ENCODE measurements at regions of chr9 and their contacts with region 1.

Region 1: DNA sequence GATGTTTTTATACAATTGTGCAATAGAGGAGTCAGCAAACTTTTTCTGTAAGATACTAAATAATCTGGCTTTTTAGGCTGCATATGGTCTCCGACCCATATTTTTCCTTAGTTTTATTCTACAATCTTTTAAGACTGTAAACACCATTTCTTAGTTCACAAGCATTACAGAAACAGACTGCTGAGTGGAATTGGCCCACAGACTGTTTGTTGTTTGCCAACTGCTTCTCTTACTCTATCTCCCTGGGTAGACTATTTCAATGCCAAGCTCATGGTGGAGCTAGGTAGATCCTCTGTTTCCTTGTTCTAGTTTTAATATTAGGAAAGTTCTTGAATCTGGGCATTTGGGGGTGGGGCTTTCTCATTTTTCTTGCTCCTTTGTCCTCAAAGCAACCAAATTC is 857.6 kb downstream of the TLE1 start:
- DNase-seq: no peak
- ATAC-seq: no peak
- H3K4me3 ChIP-seq: no peak overlapping the region
- H3K27ac ChIP-seq: no peak overlapping the region
- H3K4me1 ChIP-seq: no peaks in the 10 kb centered on the region
- H3K27me3 ChIP-seq: no peaks in the 10 kb centered on the region
- CTCF ChIP-seq: no peak
- POLR2A ChIP-seq: no peak

Region 2: DNA sequence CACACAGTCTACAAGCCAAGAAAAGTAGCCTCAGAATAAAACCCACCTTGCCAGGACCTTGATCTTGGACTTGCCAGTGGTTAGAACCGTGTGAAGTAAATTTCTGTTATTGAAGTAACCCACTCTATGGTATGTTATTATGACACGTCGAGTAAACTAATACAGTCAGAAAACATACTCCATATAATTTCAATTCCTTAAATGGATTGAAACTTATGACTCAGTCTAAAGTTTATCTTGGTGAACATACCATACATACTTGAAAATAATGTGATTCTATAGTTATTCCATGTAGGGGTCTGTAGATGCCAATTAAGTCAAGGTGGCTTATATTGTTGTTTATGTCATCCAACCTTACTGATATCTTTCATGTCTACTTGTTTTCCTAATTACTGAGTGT is 309.3 kb before region 1 on chr9:
- intact Hi-C with region 1: no loop called
- DNase-seq: no peak
- ATAC-seq: no peak
- H3K4me3 ChIP-seq: no peak overlapping the region
- H3K27ac ChIP-seq: no peak overlapping the region
- H3K4me1 ChIP-seq: no peaks in the 10 kb centered on the region
- H3K27me3 ChIP-seq: no peaks in the 10 kb centered on the region
- CTCF ChIP-seq: no peak
- POLR2A ChIP-seq: no peak

Region 3: DNA sequence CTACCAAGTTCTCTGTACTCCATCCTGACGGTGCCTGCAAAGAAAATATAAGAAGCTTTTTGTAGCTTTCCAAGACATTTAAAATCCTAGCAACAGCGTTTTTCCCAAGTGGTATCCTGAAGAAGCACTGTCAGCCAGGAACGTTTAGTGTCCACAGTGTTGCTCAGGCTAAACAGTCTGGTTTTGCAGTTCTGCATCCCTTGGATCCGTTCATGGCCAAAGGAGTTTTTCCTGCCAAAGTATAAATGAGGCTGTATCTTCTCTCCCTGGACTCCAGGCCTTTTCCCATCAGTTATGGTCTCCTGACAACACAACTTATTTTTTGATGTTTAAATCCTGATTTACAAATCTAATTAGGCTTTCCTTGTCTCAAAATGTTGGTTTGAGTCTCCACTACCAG is 68.2 kb before region 1 on chr9:
- intact Hi-C with region 1: loop called in 1 of 10 experiments (anchors 10 kb)
- DNase-seq: no peak
- ATAC-seq: no peak
- H3K4me3 ChIP-seq: no peak overlapping the region
- H3K27ac ChIP-seq: no peak overlapping the region
- H3K4me1 ChIP-seq: no peaks in the 10 kb centered on the region
- H3K27me3 ChIP-seq: no peaks in the 10 kb centered on the region
- CTCF ChIP-seq: no peak
- POLR2A ChIP-seq: no peak

Region 4: GRCh38 chr9:81083067-81083466 is 251.3 kb after region 1 on chr9:
- intact Hi-C with region 1: no loop called
- DNase-seq: no peak
- ATAC-seq: no peak
- H3K4me3 ChIP-seq: no peak overlapping the region
- H3K27ac ChIP-seq: peak overlapping the region in 1 of 12 donors; percentile 33
- H3K4me1 ChIP-seq: peaks cover 0 to 3% (median 0%) of the 10 kb centered on the region in 12 donors
- H3K27me3 ChIP-seq: no peaks in the 10 kb centered on the region
- CTCF ChIP-seq: peak in 2 of 12 donors; percentile 14 to 20
- POLR2A ChIP-seq: no peak